ENCODE measurements at regions of chrX and their contacts with region 1.

Region 1: DNA sequence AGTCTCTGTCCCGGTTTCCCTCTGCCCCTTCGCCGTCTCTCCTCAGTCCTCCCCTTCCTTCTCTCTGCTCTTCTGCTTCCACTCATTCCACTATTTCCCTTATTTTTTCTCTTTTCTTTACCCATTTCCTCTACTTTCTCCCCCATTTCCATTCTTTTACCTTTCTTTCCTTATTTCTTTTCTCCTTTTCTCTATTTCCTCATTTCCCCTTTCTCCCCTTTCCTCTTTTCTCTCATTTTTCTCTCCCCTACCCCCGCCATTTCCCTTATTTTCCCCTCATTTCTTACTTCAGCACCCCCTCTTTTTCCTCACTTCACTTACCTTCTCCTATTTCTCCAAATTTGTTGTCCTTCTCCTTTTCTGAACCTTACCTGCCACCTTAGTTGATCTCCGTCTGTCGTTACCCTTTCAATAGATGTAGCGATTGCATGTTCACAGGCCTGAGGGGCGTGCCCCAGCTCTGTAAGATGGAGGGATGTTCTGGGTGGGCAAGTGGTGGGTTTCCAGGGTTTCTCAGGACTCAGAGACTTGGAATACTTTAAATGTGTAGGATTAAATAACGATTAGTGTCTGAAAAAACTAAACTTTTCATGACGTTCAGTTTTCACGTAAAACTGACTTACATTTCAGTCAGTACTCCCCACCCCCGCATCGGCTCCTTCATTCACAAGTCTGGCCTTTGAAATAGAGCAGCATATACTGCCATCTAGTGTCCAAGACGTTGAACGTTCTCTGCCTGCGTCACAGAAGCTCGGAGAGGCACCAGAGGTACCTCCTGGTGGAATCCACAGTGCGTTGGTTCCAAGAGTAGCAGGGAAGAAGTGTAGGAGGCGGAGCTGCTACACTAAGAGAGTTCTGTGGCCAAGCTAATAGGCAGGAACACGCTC is 641 bp upstream of the NCBP2L start:
- DNase-seq: peak; percentile 62
- H3K4me3 ChIP-seq: peak overlapping the region; percentile 52 to 70 (median 64)
- H3K27ac ChIP-seq: peak overlapping the region; percentile 82 to 94 (median 88)
- H3K4me1 ChIP-seq: peaks cover 0 to 38% (median 0%) of the 10 kb centered on the region in 3 donors
- H3K27me3 ChIP-seq: no peaks in the 10 kb centered on the region
- CTCF ChIP-seq: peak; percentile 64 to 83 (median 80)
- POLR2A ChIP-seq: no peak

Region 2: DNA sequence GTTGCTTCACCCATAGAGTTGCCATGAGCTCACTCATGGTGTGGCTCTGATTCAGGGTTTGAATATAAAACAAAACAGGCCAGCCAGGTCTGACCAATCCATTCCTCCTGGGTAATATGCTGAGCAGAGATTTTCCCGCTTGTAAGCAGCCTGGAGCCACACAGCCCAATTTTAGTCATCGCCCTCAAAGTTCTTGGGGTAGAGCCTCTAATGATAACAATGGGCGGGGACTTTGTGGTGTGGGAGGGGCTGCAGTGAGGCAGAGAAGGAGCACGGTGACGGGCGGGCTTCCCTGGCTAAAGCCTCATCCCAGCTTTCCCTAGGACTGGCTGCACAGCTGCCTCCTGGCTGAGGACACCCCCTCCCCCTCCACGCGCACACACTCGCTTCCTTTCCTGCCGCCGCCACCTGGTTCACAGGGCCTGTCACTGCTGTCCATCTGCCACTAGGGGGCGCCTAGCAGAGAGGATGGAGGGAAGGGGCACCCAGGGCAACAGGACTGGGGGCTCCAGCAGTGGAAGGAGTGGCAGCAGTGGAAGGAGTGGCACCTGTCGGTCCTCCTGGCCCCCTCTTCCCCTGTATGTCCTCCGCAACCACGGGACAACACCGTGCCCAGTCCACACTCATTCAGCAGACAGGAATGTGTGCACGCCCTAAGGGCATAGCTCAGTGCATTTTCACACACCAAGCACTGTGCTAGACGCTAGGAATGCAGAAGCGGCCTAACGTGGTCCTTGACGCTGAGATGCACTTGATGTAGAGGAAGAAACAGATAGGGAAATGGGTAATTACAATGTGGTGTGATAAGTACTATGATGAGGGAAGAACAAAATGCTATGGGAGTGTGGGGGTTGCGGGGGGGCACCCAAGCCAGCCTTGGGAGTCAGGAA is 121.8 kb before region 1 on chrX:
- intact Hi-C with region 1: loop called (anchors 5 kb)
- DNase-seq: no peak
- H3K4me3 ChIP-seq: peak overlapping the region in 1 of 4 donors; percentile 26
- H3K27ac ChIP-seq: peak overlapping the region; percentile 40 to 77 (median 64)
- H3K4me1 ChIP-seq: peaks cover 0 to 20% (median 7%) of the 10 kb centered on the region in 3 donors
- H3K27me3 ChIP-seq: no peaks in the 10 kb centered on the region
- CTCF ChIP-seq: peak in 5 of 6 experiments; percentile 47 to 68 (median 62)
- POLR2A ChIP-seq: no peak